Endothelial cell of umbilical vein (primary cell): ENCODE measurements at regions of chr9 and their contacts with region 1.

Region 1: DNA sequence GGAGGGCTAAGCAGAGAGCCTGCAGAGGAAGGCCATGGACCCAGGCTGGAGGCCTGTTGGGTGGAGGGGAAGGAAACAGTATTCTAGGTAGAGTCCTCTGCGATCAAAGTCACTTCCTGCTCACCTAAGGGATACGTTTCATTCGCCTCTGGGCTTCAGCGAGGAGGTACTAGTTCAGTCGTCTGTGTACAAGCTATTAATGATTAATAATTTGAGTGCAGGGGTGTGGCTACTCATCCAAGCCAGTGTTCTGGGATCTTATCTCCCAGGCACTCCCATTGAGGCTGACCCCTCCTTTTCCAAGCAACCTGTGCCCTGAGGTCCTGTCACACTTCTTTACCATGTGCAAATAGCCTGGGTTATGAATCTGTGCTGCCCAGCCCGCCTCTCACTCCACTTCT is 25.2 kb downstream of the RALGPS1 start:
- DNase-seq: no peak
- H3K4me3 ChIP-seq: no peak overlapping the region
- H3K27ac ChIP-seq: no peak overlapping the region
- H3K4me1 ChIP-seq: no peaks in the 10 kb centered on the region
- H3K27me3 ChIP-seq: peaks cover under 1 to 6% of the 10 kb centered on the region in 2 experiments
- CTCF ChIP-seq: no peak
- POLR2A ChIP-seq: no peak

Region 2: GRCh38 chr9:126965541-126966428 is 26.0 kb after region 1 on chr9:
- CTCF ChIA-PET with region 1: interaction called, 45 read pairs
- POLR2A ChIA-PET with region 1: no interaction called
- dilution Hi-C with region 1: no loop called
- intact Hi-C with region 1: loop called (anchors 1 kb)
- DNase-seq: peak; percentile 82
- H3K4me3 ChIP-seq: no peak overlapping the region
- H3K27ac ChIP-seq: no peak overlapping the region
- H3K4me1 ChIP-seq: peaks cover 1% of the 10 kb centered on the region
- H3K27me3 ChIP-seq: no peaks in the 10 kb centered on the region
- CTCF ChIP-seq: peak; percentile 81 to 88
- POLR2A ChIP-seq: no peak

Region 3: DNA sequence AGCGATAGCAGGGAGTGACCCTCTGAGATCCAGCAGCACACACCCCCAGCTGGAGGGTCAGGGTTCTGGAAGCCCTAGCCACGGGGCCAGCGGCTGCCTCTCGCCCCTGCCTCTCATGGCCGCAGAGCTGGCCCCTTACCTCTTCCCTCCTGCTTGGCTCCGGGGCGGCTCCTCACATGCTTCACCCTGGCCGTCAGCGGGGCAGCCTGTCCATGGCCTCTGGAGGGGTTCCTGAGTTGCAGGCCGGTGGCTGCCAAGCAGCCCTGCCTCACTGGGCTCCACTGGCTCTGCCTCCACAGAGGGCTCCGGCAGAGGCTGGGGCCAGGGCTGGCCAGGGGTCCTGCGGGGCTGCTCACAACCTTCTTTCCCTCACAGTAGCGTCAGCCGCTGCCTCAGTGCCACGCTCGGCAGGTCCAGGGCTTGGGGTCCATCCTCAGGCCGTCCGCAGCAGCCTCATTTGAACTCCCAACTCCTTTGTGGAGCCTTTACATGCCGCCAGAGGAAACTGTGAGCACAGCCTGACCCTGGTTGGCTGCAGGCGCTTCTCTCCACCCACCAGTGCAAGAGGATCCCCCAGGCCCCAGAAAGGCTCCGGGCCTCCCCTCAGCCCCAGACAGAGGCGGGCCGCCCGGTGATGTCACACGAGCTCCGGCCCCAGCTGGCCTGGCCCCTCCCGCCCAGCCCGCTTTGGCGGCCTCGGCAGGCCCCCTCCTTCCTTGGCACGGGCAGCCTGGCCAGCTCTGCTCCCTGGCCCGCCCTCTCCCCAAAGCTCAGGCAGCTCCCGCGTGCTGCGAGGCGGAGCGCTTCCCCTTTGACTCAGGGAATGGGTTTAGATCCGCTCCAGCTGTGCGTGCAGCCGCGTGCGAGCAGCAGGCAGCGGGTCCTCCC is 182.6 kb after region 1 on chr9 and contains the start of gene ANGPTL2:
- CTCF ChIA-PET with region 1: interaction called, 14 read pairs
- POLR2A ChIA-PET with region 1: no interaction called
- dilution Hi-C with region 1: no loop called
- intact Hi-C with region 1: no loop called
- DNase-seq: peak; percentile 94
- H3K4me3 ChIP-seq: peak within 1 kb of the TSS; percentile 30 to 64 (median 53)
- H3K27ac ChIP-seq: peak within 1 kb of the TSS; percentile 70
- H3K4me1 ChIP-seq: peaks cover 16% of the 10 kb centered on the region
- H3K27me3 ChIP-seq: peaks cover 1 to 2% of the 10 kb centered on the region in 2 experiments
- CTCF ChIP-seq: peak in 1 of 2 donors; percentile 5
- POLR2A ChIP-seq: peak; percentile 70
- total RNA-seq, gene ANGPTL2: 21.8 and 24.5 TPM in 2 replicates

Region 4: DNA sequence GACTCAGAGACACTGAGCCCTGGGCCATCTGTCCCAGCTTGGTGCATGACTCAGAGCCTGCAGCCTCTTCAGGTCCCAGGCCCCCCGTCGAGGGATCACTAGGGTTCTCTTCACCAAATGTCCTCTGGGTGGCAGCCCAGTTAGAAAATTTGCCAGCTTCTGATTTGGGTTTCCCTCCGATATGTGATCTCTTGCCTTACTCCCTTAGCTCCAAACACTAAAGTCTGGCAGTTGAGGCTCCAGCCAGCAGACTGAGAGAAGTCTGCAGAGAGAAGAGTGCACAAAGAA is 265.3 kb after region 1 on chr9:
- CTCF ChIA-PET with region 1: interaction called, 272 read pairs
- POLR2A ChIA-PET with region 1: no interaction called
- dilution Hi-C with region 1: no loop called
- intact Hi-C with region 1: no loop called
- DNase-seq: no peak
- H3K4me3 ChIP-seq: no peak overlapping the region
- H3K27ac ChIP-seq: no peak overlapping the region
- H3K4me1 ChIP-seq: no peaks in the 10 kb centered on the region
- H3K27me3 ChIP-seq: peaks cover 0 to 1% of the 10 kb centered on the region in 2 experiments
- CTCF ChIP-seq: peak in 1 of 2 donors; percentile 21
- POLR2A ChIP-seq: no peak

Region 5: DNA sequence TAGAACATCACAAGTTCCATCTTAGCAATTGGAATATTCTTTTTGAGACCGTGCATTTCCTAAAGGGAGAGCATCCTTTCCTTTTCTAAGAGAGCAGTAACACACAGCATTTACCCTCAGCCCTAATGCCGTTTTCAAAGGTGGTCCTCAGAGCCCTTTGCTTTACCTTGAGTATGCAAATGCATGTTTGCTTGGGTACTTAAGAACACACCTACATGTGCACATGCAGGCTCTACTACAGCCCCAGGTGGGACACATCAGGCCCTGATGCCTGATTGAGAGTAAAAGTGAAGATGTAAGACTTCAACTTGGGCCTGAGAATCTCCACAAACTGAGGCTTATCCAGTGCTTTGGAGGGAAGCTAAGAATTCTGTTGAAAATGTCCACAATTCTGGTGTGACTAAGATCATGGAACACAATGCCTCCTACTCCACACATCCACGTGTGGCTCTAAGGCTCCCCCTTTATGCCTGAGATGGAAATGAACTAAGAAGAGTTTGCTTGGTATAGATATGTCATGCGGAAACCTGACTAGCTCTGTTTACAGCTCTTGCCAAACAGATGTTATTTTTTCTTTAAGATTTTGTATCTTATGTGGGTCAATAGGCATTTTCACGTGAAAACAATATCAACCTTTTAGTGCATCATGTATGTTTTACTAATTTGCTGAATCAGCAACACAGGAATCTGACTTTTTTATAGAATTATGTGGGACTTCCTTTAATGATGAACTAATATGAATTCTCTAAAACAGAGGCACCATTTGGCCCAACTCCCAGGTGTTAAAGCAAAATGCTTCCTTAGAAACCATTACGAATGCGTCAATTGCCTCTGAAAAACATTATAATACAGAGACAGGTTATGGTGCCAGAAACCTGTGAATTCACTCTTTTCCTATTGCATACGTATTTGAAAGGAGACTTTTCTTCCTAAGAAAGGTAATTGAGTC is 408.3 kb after region 1 on chr9:
- CTCF ChIA-PET with region 1: interaction called, 13 read pairs
- POLR2A ChIA-PET with region 1: no interaction called
- dilution Hi-C with region 1: no loop called
- intact Hi-C with region 1: no loop called
- DNase-seq: peak; percentile 75
- H3K4me3 ChIP-seq: no peak overlapping the region
- H3K27ac ChIP-seq: no peak overlapping the region
- H3K4me1 ChIP-seq: no peaks in the 10 kb centered on the region
- H3K27me3 ChIP-seq: no peaks in the 10 kb centered on the region
- CTCF ChIP-seq: peak; percentile 33 to 57
- POLR2A ChIP-seq: no peak